GM23248 (cell line): ENCODE measurements at regions of chr1 and their contacts with region 1.

Region 1: DNA sequence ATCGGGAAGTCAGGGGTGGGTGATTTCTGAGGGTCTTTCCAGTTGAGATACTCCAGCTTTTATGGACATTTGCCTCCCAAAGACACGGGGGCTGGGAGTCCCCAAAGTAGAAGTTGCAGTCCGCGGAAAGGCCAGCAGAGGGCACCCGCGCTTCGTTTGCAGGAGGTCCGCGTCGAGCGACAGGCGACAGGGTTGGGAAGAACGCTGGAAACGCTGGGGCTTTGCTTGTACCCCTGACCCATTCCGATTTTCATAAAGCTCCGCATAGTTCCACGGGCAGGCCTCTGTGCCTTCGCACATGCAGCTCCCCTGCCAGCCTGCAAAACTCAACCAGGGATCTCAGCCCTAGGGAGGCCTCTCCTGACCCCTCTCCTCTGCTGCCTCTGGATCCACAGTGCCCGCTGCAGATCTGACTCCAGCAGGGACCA is 44.2 kb upstream of the LAPTM5 start:
- DNase-seq: peak; percentile 72
- H3K4me3 ChIP-seq: no peak overlapping the region
- H3K27ac ChIP-seq: no peak overlapping the region
- H3K4me1 ChIP-seq: 0 out of 2 replicates have a peak, but pooled peaks cover 3% of the 10 kb centered on the region
- H3K27me3 ChIP-seq: no peaks in the 10 kb centered on the region

Region 2: DNA sequence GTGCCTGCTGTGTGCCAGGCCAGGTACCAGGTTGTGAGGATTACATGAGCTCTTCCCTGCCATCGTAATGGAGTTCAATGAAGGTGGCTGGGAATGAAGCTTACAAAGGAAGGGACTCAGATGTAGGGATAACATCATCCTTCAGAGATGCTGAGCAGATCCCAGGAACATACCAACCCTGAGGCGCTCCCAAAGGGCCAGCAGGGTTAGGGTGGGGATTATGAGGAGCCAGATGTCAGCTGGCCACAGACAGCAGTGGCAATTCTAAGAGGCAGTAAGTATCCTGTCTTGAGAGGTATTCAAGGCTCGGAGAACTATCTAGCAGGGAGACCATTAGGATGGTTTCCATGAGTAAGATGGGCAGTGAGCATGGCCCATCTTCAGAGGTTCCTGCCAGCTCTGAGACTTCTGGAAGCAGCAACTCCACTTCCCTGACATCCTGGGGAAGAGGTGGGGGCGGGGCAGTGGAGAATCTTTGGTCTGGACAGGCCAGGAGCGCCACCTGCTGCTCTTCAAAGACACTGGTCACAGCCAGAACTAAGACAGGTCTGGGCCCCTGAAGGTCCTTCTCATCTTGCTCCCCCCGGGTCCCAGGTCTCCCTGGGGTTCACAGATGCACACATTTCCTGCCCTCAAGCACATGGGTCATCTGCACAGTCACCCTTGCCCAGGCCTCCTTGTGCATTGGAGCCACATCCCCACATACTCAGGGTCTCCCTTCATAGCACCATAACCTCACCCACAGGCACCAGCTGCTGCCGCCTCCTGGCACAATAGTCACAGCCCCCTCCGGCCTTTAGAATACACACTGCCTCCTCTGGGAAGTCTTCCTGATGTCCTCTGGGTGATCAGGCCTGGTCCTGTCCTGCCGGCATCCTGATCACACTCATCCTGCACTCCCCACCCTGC is 109.5 kb after region 1 on chr1:
- in situ Hi-C with region 1: loop called (anchors 5 kb)
- DNase-seq: peak; percentile 93
- H3K4me3 ChIP-seq: no peak overlapping the region
- H3K27ac ChIP-seq: no peak overlapping the region
- H3K4me1 ChIP-seq: no peaks in the 10 kb centered on the region
- H3K27me3 ChIP-seq: no peaks in the 10 kb centered on the region